Dorsolateral prefrontal cortex (tissue), 120 donors: ENCODE measurements at regions of chr17 and their contacts with region 1.

Region 1: GRCh38 chr17:38498186-38498752 is 70.0 kb downstream of the ARHGAP23 start:
- DNase-seq: no peak
- H3K4me3 ChIP-seq: no peak overlapping the region
- H3K27ac ChIP-seq: peak overlapping the region in 1 of 59 donors; percentile 48
- H3K27me3 ChIP-seq: no peaks in the 10 kb centered on the region
- CTCF ChIP-seq: no peak

Region 2: GRCh38 chr17:38403491-38403890 is 94.8 kb before region 1 on chr17:
- intact Hi-C with region 1: no loop called
- DNase-seq: no peak
- H3K4me3 ChIP-seq: no peak overlapping the region
- H3K27ac ChIP-seq: peak overlapping the region in 2 of 59 donors; percentile 9 to 34
- H3K27me3 ChIP-seq: no peaks in the 10 kb centered on the region
- CTCF ChIP-seq: no peak

Region 3: GRCh38 chr17:38509008-38509771 is 10.9 kb after region 1 on chr17:
- intact Hi-C with region 1: no loop called
- DNase-seq: peak; percentile 68 to 94 (median 86)
- H3K4me3 ChIP-seq: peak overlapping the region in 43 of 59 donors; percentile 5 to 51 (median 35)
- H3K27ac ChIP-seq: peak overlapping the region in 49 of 59 donors; percentile 12 to 85 (median 68)
- H3K27me3 ChIP-seq: no peaks in the 10 kb centered on the region
- CTCF ChIP-seq: peak; percentile 39 to 86 (median 68)

Region 4: GRCh38 chr17:38729886-38730525 is 231.7 kb after region 1 on chr17 and contains the start of gene CISD3:
- intact Hi-C with region 1: loop called in 1 of 2 experiments (anchors 10 kb)
- DNase-seq: peak in 8 of 10 donors; percentile 39 to 87 (median 70)
- H3K4me3 ChIP-seq: peak within 1 kb of the TSS; percentile 55 to 84 (median 72)
- H3K27ac ChIP-seq: peak within 1 kb of the TSS; percentile 5 to 97 (median 92)
- H3K27me3 ChIP-seq: no peaks in the 10 kb centered on the region
- CTCF ChIP-seq: peak in 55 of 56 donors; percentile 22 to 90 (median 66)
- total RNA-seq, gene CISD3: 15.5 to 38.5 (median 25.9) TPM